ENCODE measurements at regions of chr6 and their contacts with region 1.

Region 1: DNA sequence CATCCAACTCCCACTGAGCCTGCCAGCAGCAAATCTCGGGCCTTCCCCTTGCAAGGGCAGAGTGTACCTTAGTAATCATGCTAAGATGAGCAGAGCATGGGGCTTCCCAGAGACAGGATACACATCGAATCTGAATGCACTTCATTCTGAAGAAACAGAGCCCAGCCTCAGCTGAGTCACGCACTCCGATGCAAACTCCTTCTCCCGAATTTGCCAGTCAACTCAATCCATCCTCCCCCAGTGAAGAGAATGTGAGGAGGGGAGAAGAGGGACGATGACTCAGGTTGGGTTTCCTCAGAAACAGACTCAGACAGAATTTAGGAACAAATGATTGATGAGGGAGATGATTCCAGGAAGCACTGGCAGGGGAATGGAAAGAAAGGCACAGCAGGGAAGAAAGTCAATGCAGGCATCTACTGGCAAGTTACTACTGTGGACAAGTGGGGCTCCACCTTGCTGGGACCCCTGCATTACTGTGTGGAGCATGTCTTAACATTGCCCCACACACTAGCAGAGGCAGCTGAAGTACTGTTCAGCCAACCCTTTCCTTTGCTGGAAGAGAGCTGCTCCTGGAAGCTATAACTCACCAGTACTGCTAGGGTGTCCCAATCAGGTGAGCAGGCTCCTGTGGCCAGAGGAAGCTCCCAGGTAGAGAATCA is 251.6 kb downstream of the ADGB start:
- DNase-seq: peak; percentile 83
- H3K4me3 Mint-ChIP-seq: no peak overlapping the region
- H3K27ac Mint-ChIP-seq: peak overlapping the region; percentile 86
- H3K4me1 Mint-ChIP-seq: peaks cover 32% of the 10 kb centered on the region
- H3K27me3 Mint-ChIP-seq: peaks cover 7% of the 10 kb centered on the region

Region 2: DNA sequence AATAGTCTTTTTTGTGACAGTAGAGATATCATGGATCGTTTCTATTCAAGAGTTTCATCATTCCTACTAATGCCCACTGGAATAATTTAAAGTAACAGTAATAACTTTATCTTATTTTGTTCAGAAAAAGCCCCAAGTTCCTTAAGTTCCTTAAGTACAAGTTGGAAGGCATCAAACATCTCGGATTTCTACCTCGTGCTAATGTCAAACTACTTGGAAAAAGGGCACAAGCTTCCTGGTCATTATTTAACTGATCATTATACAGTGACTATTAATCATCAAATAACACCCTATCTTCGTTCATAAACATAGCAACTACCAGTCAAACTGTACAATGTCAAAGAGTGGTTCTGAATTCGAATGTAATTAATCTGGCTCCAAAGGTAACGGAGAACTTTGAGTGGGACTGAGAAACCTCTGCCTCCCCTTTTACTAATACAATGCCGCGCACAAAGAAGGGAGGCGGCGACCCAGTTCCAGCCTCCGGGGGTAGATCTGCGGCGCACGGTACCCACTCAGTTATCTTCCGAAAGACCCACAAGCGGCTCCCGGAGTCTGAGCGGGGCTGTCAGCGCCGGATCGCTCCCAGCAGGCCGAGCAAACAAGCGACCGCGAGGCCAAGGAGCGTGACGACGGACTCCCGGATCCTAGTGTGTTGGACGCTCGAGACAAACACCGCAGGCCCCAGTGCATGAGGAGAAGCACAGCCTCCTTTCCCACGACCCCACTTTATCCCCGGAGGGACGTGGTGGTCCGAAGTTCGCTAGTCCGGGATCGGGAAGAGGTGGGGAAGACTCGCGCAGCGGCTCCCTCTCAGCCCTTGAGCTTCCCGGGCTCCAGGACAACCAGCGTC is 886.9 kb before region 1 on chr6:
- CTCF ChIA-PET with region 1: no interaction called
- POLR2A ChIA-PET with region 1: no interaction called
- intact Hi-C with region 1: loop called (anchors 2 kb)
- DNase-seq: peak; percentile 60
- H3K4me3 Mint-ChIP-seq: peak overlapping the region; percentile 94
- H3K27ac Mint-ChIP-seq: peak overlapping the region; percentile 85
- H3K4me1 Mint-ChIP-seq: peaks cover 50% of the 10 kb centered on the region
- H3K27me3 Mint-ChIP-seq: no peaks in the 10 kb centered on the region

Region 3: DNA sequence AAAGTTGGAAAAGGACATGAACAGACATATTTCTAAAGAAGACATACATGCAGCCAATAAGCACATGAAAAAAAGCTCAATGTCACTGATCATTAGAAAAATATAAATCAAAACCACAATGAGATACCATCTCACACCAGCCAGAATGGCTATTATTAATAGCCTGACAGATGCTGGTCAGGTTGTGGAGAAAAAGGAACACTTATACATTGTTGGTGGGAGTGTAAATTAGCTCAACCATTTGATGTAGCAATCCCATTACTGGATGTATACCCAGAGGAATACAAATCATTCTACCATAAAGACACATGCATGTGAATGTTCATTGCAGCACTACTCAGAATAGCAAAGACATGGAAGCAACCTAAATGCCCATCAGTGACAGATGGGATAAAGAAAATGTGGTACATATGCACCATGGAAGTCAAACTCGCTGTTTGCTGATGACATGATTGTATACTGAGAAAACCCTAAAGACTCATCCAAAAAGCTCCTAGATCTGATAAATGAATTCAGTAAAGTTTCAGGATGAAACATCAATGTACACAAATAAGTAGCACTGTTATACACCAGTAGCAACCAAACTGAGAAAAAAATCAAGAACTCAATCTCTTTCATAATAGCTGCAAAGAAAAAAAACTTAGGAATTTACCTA is 54.8 kb before region 1 on chr6:
- CTCF ChIA-PET with region 1: no interaction called
- POLR2A ChIA-PET with region 1: no interaction called
- intact Hi-C with region 1: loop called (anchors 2 kb)
- DNase-seq: no peak
- H3K4me3 Mint-ChIP-seq: no peak overlapping the region
- H3K27ac Mint-ChIP-seq: no peak overlapping the region
- H3K4me1 Mint-ChIP-seq: peaks cover 4% of the 10 kb centered on the region
- H3K27me3 Mint-ChIP-seq: peaks cover 5% of the 10 kb centered on the region

Region 4: GRCh38 chr6:147202516-147203312 is 352.3 kb after region 1 on chr6:
- CTCF ChIA-PET with region 1: no interaction called
- POLR2A ChIA-PET with region 1: interaction called, 11 read pairs
- intact Hi-C with region 1: loop called (anchors 1 kb)
- DNase-seq: peak; percentile 87
- H3K4me3 Mint-ChIP-seq: peak overlapping the region; percentile 81
- H3K27ac Mint-ChIP-seq: peak overlapping the region; percentile 96
- H3K4me1 Mint-ChIP-seq: peaks cover 21% of the 10 kb centered on the region
- H3K27me3 Mint-ChIP-seq: no peaks in the 10 kb centered on the region

Region 5: GRCh38 chr6:147322299-147323162 is 472.2 kb after region 1 on chr6:
- CTCF ChIA-PET with region 1: no interaction called
- POLR2A ChIA-PET with region 1: no interaction called
- intact Hi-C with region 1: loop called (anchors 1 kb)
- DNase-seq: peak; percentile 25
- H3K4me3 Mint-ChIP-seq: peak overlapping the region; percentile 28
- H3K27ac Mint-ChIP-seq: peak overlapping the region; percentile 90
- H3K4me1 Mint-ChIP-seq: peaks cover 17% of the 10 kb centered on the region
- H3K27me3 Mint-ChIP-seq: no peaks in the 10 kb centered on the region

Region 6: GRCh38 chr6:148203970-148204369 is 1353.6 kb after region 1 on chr6:
- CTCF ChIA-PET with region 1: no interaction called
- POLR2A ChIA-PET with region 1: no interaction called
- intact Hi-C with region 1: loop called (anchors 5 kb)
- DNase-seq: peak; percentile 80
- H3K4me3 Mint-ChIP-seq: peak overlapping the region; percentile 55
- H3K27ac Mint-ChIP-seq: peak overlapping the region; percentile 72
- H3K4me1 Mint-ChIP-seq: peaks cover 35% of the 10 kb centered on the region
- H3K27me3 Mint-ChIP-seq: peaks cover 69% of the 10 kb centered on the region

Measured in activated CD4-positive, alpha-beta memory T cell treated with anti-CD3 and anti-CD28 coated beads for 36 hours (primary cell).